Naive thymus-derived CD4-positive, alpha-beta T cell (primary cell): ENCODE measurements at regions of chr1 and their contacts with region 1.

Region 1: DNA sequence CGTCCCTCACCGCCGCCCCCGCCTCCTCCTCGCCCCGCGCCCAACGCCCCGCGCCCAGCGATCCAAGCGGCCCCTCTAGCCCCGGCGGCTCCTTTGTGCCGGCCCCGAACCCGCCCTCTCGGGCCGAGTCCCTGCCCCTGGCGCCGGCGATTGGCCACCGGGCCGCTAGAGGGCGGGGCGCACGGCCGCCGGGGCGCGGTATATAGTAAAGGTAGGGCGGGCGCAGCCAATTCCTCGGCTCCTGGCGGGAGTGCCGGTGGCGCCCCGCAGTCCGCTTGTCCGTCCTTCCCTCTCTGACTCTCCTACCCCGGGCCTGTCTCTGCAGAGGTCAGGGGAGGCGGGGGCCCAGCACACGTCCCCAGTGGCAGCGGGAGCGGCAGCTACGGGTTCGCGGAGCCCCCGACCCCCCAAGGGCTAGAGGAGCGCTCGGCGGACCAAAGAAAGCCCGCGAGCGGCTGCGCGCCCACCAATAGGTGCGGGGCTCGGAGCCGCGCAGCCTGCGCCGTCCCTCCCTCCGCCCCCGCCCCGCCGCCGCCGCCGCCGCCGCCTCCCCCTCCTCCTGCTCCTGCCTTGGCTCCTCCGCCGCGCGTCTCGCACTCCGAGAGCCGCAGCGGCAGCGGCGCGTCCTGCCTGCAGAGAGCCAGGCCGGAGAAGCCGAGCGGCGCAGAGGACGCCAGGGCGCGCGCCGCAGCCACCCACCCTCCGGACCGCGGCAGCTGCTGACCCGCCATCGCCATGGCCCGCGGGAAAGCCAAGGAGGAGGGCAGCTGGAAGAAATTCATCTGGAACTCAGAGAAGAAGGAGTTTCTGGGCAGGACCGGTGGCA is at the start of gene ATP1B1:
- DNase-seq: peak; percentile 66 to 90 (median 76)
- ATAC-seq: peak; percentile 95
- H3K4me3 ChIP-seq: peak within 1 kb of the TSS; percentile 67
- H3K4me3 Mint-ChIP-seq: peak within 1 kb of the TSS; percentile 81 to 93 (median 88)
- H3K27ac ChIP-seq: peak within 1 kb of the TSS; percentile 58
- H3K27ac Mint-ChIP-seq: peak within 1 kb of the TSS in 8 of 9 donors; percentile 29 to 85 (median 56)
- H3K4me1 ChIP-seq: peaks cover 7 to 21% of the 10 kb centered on the region in 2 donors
- H3K4me1 Mint-ChIP-seq: peaks cover 24 to 48% (median 40%) of the 10 kb centered on the region in 7 donors
- H3K27me3 ChIP-seq: no peaks in the 10 kb centered on the region
- H3K27me3 Mint-ChIP-seq: peaks cover 0 to 19% (median 0%) of the 10 kb centered on the region in 5 donors
- total RNA-seq, gene ATP1B1: 1.8 to 10.6 (median 2.3) TPM

Region 2: GRCh38 chr1:168234846-168235547 is 871.3 kb before region 1 on chr1:
- CTCF ChIA-PET with region 1: no interaction called
- POLR2A ChIA-PET with region 1: no interaction called
- intact Hi-C with region 1: loop called in 1 of 2 experiments (anchors 5 kb)
- DNase-seq: peak in 7 of 9 donors; percentile 17 to 38 (median 27)
- ATAC-seq: peak; percentile 95
- H3K4me3 ChIP-seq: no peak overlapping the region
- H3K4me3 Mint-ChIP-seq: peak overlapping the region in 1 of 10 donors; percentile 26
- H3K27ac ChIP-seq: no peak overlapping the region
- H3K27ac Mint-ChIP-seq: peak overlapping the region in 4 of 9 donors; percentile 1 to 68 (median 34)
- H3K4me1 ChIP-seq: peaks cover 9 to 11% of the 10 kb centered on the region in 2 donors
- H3K4me1 Mint-ChIP-seq: peaks cover 33 to 71% (median 61%) of the 10 kb centered on the region in 7 donors
- H3K27me3 ChIP-seq: no peaks in the 10 kb centered on the region
- H3K27me3 Mint-ChIP-seq: no peaks in the 10 kb centered on the region

Region 3: GRCh38 chr1:168603501-168604110 is 502.7 kb before region 1 on chr1:
- CTCF ChIA-PET with region 1: no interaction called
- POLR2A ChIA-PET with region 1: no interaction called
- intact Hi-C with region 1: loop called in 1 of 2 experiments (anchors 10 kb)
- DNase-seq: peak; percentile 42 to 72 (median 58)
- ATAC-seq: peak; percentile 89
- H3K4me3 ChIP-seq: no peak overlapping the region
- H3K4me3 Mint-ChIP-seq: no peak overlapping the region
- H3K27ac ChIP-seq: no peak overlapping the region
- H3K27ac Mint-ChIP-seq: no peak overlapping the region
- H3K4me1 ChIP-seq: no peaks in the 10 kb centered on the region
- H3K4me1 Mint-ChIP-seq: peaks cover 0 to 7% (median 0%) of the 10 kb centered on the region in 7 donors
- H3K27me3 ChIP-seq: peaks cover 0 to 4% of the 10 kb centered on the region in 2 donors
- H3K27me3 Mint-ChIP-seq: peaks cover 0 to 30% (median 1%) of the 10 kb centered on the region in 5 donors

Region 4: GRCh38 chr1:169052727-169053126 is 53.6 kb before region 1 on chr1:
- CTCF ChIA-PET with region 1: no interaction called
- POLR2A ChIA-PET with region 1: no interaction called
- intact Hi-C with region 1: no loop called
- DNase-seq: no peak
- ATAC-seq: no peak
- H3K4me3 ChIP-seq: no peak overlapping the region
- H3K4me3 Mint-ChIP-seq: no peak overlapping the region
- H3K27ac ChIP-seq: no peak overlapping the region
- H3K27ac Mint-ChIP-seq: no peak overlapping the region
- H3K4me1 ChIP-seq: no peaks in the 10 kb centered on the region
- H3K4me1 Mint-ChIP-seq: peaks cover 0 to 22% (median 5%) of the 10 kb centered on the region in 7 donors
- H3K27me3 ChIP-seq: no peaks in the 10 kb centered on the region
- H3K27me3 Mint-ChIP-seq: peaks cover 0 to 6% (median 2%) of the 10 kb centered on the region in 5 donors

Region 5: GRCh38 chr1:169091480-169091941 is 14.8 kb before region 1 on chr1:
- CTCF ChIA-PET with region 1: interaction called, 3 read pairs
- POLR2A ChIA-PET with region 1: interaction called, 3 read pairs
- intact Hi-C with region 1: loop called (anchors 2 kb)
- DNase-seq: no peak
- ATAC-seq: no peak
- H3K4me3 ChIP-seq: no peak overlapping the region
- H3K4me3 Mint-ChIP-seq: no peak overlapping the region
- H3K27ac ChIP-seq: no peak overlapping the region
- H3K27ac Mint-ChIP-seq: no peak overlapping the region
- H3K4me1 ChIP-seq: peaks cover 0 to 6% of the 10 kb centered on the region in 2 donors
- H3K4me1 Mint-ChIP-seq: peaks cover 0 to 16% (median 9%) of the 10 kb centered on the region in 7 donors
- H3K27me3 ChIP-seq: no peaks in the 10 kb centered on the region
- H3K27me3 Mint-ChIP-seq: peaks cover 0 to 12% (median 4%) of the 10 kb centered on the region in 5 donors

Region 6: DNA sequence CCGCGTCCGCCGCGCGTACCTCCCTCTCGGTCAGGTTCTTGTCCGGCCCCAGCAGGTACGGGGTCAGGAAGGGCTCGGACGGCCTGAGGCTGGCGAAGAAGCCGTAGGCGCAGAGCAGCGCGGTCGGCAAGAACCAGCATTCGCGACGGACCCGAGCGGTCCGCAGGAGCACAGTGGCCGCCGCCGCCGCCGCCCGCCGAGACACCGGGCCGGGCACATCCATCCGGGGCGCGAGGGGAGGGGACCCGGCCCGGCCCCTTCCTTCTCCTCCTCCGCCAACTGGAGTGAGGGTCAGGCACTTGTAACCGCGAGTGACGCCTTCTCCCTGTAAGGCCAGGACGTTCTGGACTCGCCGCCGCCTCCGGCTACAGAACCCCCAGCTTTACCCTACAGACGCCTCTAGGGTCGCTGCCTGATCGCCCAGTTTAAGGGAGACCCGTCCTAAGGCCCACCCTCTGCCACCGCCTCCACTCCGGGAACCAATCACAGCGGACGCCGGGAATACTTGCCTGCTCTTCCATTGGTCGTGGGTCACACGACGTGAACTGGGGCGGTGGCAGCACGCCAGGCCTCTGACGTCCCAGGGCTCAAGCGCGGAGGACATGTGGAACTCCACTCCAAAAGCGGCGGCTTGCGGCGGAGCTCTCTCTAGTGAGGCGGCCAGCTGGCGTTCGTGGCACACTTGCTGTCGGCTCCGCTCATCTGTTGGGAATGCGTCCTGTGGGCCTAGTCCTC is 379.4 kb after region 1 on chr1 and contains the start of gene SLC19A2:
- CTCF ChIA-PET with region 1: no interaction called
- POLR2A ChIA-PET with region 1: no interaction called
- intact Hi-C with region 1: loop called in 1 of 2 experiments (anchors 5 kb)
- DNase-seq: peak; percentile 79 to 94 (median 89)
- ATAC-seq: peak; percentile 99
- H3K4me3 ChIP-seq: peak within 1 kb of the TSS; percentile 66
- H3K4me3 Mint-ChIP-seq: peak within 1 kb of the TSS; percentile 87 to 98 (median 94)
- H3K27ac ChIP-seq: peak within 1 kb of the TSS; percentile 81
- H3K27ac Mint-ChIP-seq: peak within 1 kb of the TSS; percentile 86 to 98 (median 94)
- H3K4me1 ChIP-seq: peaks cover 4 to 12% of the 10 kb centered on the region in 2 donors
- H3K4me1 Mint-ChIP-seq: peaks cover 35 to 56% (median 46%) of the 10 kb centered on the region in 7 donors
- H3K27me3 ChIP-seq: no peaks in the 10 kb centered on the region
- H3K27me3 Mint-ChIP-seq: peaks cover 0 to 8% (median 0%) of the 10 kb centered on the region in 5 donors
- total RNA-seq, gene SLC19A2: 3.7 to 5.9 (median 4.8) TPM